ENCODE measurements at regions of chr7 and their contacts with region 1.

Region 1: GRCh38 chr7:99990460-99990852 is 14.6 kb upstream of the AZGP1 start:
- DNase-seq: no peak
- ATAC-seq: no peak

Region 2: GRCh38 chr7:99918959-99919813 is 71.3 kb before region 1 on chr7 and contains the start of gene TRIM4:
- intact Hi-C with region 1: loop called (anchors 5 kb)
- DNase-seq: peak; percentile 94
- ATAC-seq: peak; percentile 99
- total RNA-seq, gene TRIM4: 7.1 TPM

Region 3: DNA sequence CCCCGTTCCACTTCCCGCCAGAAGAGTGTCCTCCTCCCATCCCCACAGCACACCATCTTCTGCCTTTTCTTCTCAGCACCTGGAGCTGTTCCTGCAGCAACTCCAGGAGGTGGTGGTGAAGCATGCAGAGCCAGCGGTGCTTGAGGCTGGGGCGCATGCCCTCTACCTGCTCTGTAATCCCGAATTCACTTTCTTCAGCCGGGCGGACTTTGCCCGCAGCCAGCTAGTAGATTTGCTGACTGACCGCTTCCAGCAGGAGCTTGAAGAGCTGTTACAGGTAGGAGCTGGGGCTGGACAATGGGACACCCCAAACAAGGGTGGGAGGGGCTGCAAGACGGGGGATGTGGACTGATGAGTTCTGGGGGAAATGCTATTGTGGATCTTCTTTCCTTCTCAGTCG is 210.2 kb after region 1 on chr7:
- intact Hi-C with region 1: no loop called
- DNase-seq: no peak
- ATAC-seq: no peak

Measured in left ventricle myocardium superior (tissue), 1 donor.